ENCODE measurements at regions of chr7 and their contacts with region 1.

Region 1: GRCh38 chr7:104185346-104185745 is 22.5 kb downstream of the ORC5 start:
- DNase-seq: no peak
- ATAC-seq: no peak

Region 2: DNA sequence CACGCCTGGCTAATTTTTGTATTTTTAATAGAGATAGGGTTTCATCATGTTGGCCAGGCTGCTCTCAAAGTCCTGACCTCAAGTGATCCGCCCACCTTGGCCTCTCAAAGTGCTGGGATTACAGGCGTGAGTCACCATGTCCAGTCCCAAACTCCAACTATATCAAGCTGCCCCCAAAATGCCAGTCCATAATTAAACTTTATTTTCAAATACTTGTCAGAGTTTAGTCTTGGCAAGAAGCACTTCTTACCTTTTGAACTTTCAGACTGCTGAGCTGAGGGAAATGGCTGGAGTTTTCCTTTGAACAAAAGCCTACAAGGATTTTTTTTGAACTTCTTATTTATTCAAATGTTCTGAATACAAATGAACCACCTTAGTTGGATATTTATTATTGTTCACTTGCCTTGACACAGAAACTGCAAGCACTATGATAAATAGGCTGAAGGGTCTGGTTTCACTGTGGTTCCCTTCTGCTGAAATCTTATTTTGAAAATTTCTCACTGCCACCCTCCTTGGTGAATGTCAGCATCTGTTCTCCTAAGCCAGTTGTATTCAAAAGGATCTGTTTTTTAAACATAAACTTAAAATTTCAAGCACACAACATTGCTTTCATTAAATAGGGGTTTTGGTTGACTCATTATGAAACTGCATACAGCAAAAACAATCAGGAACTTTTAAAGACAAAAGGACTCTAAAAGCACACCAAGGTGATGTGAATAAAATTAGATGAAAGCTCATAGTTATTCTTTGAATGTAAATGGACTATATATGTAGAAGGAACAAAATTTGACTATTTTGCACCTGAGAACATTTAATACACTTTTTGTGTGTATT is 637.7 kb before region 1 on chr7:
- intact Hi-C with region 1: no loop called
- DNase-seq: no peak
- ATAC-seq: no peak

Region 3: GRCh38 chr7:104149822-104150221 is 35.5 kb before region 1 on chr7:
- intact Hi-C with region 1: loop called in 1 of 2 experiments (anchors 1 kb)
- DNase-seq: no peak
- ATAC-seq: no peak

Region 4: DNA sequence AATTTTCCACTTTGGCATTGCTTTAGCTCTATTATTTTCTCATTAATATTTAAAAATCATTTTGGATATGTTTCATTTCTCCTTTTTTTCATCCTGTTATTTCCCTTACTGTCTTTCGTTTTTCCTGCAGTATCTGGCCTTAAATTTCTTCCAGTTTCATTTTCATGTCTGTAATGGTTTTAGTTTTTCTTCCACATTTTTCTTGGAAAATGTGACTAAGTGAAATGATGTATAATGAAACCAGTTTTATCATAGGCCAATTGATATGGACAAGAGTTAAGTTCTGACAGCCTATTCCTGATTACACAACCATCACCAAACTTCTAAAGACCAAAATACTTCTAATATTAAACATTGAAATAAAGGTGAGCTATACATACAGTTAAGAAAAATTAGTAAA is 301.6 kb after region 1 on chr7:
- intact Hi-C with region 1: no loop called
- DNase-seq: no peak
- ATAC-seq: no peak